ENCODE measurements at regions of chr3 and their contacts with region 1.

Region 1: GRCh38 chr3:175082631-175083030 is 223.5 kb downstream of the NAALADL2 start:
- DNase-seq: no peak
- ATAC-seq: no peak
- H3K4me3 ChIP-seq: no peak overlapping the region
- H3K27ac ChIP-seq: no peak overlapping the region
- H3K4me1 ChIP-seq: no peaks in the 10 kb centered on the region
- H3K27me3 ChIP-seq: no peaks in the 10 kb centered on the region
- CTCF ChIP-seq: no peak
- POLR2A ChIP-seq: no peak
- RAD21 ChIP-seq: no peak

Region 2: DNA sequence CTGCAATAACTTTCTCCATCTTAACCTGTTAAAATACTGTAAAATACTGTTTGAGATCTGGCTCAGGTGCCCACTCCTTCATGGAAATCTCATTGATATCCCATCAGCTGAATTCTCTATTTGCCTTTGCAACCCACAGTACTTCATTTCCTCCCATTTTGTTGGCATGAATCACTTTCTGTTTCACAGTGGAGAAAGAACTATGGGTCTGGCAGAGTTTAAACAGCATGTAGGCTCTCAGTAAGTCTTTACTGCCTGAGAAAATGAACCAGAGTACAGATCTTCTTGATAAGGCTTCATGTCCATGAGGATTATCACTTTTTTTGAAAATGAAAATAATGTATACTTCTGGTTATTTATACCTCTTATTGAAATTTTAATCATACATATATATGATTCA is 22.4 kb after region 1 on chr3:
- CTCF ChIA-PET with region 1: no interaction called
- POLR2A ChIA-PET with region 1: no interaction called
- RAD21 ChIA-PET with region 1: no interaction called
- intact Hi-C with region 1: no loop called
- DNase-seq: no peak
- ATAC-seq: no peak
- H3K4me3 ChIP-seq: no peak overlapping the region
- H3K27ac ChIP-seq: no peak overlapping the region
- H3K4me1 ChIP-seq: no peaks in the 10 kb centered on the region
- H3K27me3 ChIP-seq: no peaks in the 10 kb centered on the region
- CTCF ChIP-seq: no peak
- POLR2A ChIP-seq: no peak
- RAD21 ChIP-seq: no peak

Region 3: GRCh38 chr3:175129126-175129525 is 46.5 kb after region 1 on chr3:
- CTCF ChIA-PET with region 1: no interaction called
- POLR2A ChIA-PET with region 1: no interaction called
- RAD21 ChIA-PET with region 1: no interaction called
- intact Hi-C with region 1: loop called (anchors 1 kb)
- DNase-seq: no peak
- ATAC-seq: no peak
- H3K4me3 ChIP-seq: no peak overlapping the region
- H3K27ac ChIP-seq: no peak overlapping the region
- H3K4me1 ChIP-seq: no peaks in the 10 kb centered on the region
- H3K27me3 ChIP-seq: no peaks in the 10 kb centered on the region
- CTCF ChIP-seq: no peak
- POLR2A ChIP-seq: no peak
- RAD21 ChIP-seq: no peak